ENCODE measurements at regions of chr6 and their contacts with region 1.

Region 1: GRCh38 chr6:11653028-11653583 is 115.6 kb downstream of the TMEM170B start:
- DNase-seq: peak; percentile 42
- H3K4me3 Mint-ChIP-seq: no peak overlapping the region
- H3K27ac Mint-ChIP-seq: no peak overlapping the region
- H3K4me1 Mint-ChIP-seq: peaks cover 7% of the 10 kb centered on the region
- H3K27me3 Mint-ChIP-seq: no peaks in the 10 kb centered on the region
- CTCF ChIP-seq: no peak

Region 2: GRCh38 chr6:11258260-11259237 is 394.6 kb before region 1 on chr6:
- CTCF ChIA-PET with region 1: no interaction called
- intact Hi-C with region 1: no loop called
- DNase-seq: no peak
- H3K4me3 Mint-ChIP-seq: no peak overlapping the region
- H3K27ac Mint-ChIP-seq: no peak overlapping the region
- H3K4me1 Mint-ChIP-seq: peaks cover 11% of the 10 kb centered on the region
- H3K27me3 Mint-ChIP-seq: no peaks in the 10 kb centered on the region
- CTCF ChIP-seq: no peak

Region 3: DNA sequence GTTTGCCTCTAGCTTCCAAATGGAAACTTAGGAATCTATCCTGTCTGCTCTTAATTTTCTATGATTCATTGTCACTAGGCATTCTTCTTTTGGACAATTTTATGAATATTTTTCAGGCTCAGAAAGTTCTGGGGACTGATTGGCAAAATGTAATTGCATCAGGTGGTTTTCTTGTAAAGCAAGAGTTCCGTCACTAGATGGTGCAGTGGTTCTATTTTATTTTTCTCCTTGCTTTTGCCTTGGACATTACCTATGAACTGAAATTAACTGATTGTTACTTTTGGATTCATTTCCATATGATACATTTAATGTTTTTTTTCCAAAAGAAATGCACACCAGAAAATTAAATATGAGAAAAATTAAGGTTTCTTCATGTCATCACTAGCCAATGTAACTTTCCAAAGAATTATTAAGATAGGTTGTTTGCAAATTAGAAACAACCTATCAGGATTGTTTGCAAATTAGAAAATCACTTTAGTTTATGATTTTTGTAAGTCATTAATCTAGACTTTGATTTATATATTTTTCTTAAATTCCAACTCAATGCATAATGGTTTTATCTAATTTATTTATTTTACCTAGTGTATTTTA is 67.6 kb before region 1 on chr6:
- CTCF ChIA-PET with region 1: no interaction called
- intact Hi-C with region 1: loop called (anchors 5 kb)
- DNase-seq: no peak
- H3K4me3 Mint-ChIP-seq: no peak overlapping the region
- H3K27ac Mint-ChIP-seq: no peak overlapping the region
- H3K4me1 Mint-ChIP-seq: no peaks in the 10 kb centered on the region
- H3K27me3 Mint-ChIP-seq: no peaks in the 10 kb centered on the region
- CTCF ChIP-seq: no peak

Region 4: GRCh38 chr6:11609315-11610071 is 43.6 kb before region 1 on chr6:
- CTCF ChIA-PET with region 1: no interaction called
- intact Hi-C with region 1: loop called (anchors 5 kb)
- DNase-seq: no peak
- H3K4me3 Mint-ChIP-seq: no peak overlapping the region
- H3K27ac Mint-ChIP-seq: no peak overlapping the region
- H3K4me1 Mint-ChIP-seq: peaks cover 17% of the 10 kb centered on the region
- H3K27me3 Mint-ChIP-seq: no peaks in the 10 kb centered on the region
- CTCF ChIP-seq: no peak

Region 5: GRCh38 chr6:11854408-11855165 is 201.5 kb after region 1 on chr6:
- CTCF ChIA-PET with region 1: no interaction called
- intact Hi-C with region 1: no loop called
- DNase-seq: no peak
- H3K4me3 Mint-ChIP-seq: no peak overlapping the region
- H3K27ac Mint-ChIP-seq: no peak overlapping the region
- H3K4me1 Mint-ChIP-seq: no peaks in the 10 kb centered on the region
- H3K27me3 Mint-ChIP-seq: no peaks in the 10 kb centered on the region
- CTCF ChIP-seq: no peak

Region 6: DNA sequence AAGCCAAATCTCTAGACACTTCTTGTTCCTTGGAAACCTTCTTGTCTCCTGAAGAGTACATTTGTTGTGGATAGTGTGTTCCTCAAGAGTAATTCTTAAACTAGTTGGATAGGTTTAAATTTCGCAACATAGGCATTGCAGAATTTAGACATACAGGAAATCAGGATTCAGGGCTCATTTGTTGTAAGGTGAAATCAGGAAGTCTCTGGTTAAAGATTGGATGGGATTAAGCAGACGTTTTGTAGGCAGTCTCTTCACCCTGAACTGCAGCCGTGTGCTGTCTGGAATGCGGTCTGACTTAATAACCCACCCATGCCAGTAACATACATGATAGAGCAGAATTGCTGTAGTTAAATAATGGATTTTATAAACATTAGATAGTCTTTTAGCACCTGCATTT is 380.7 kb after region 1 on chr6:
- CTCF ChIA-PET with region 1: no interaction called
- intact Hi-C with region 1: loop called (anchors 10 kb)
- DNase-seq: no peak
- H3K4me3 Mint-ChIP-seq: no peak overlapping the region
- H3K27ac Mint-ChIP-seq: no peak overlapping the region
- H3K4me1 Mint-ChIP-seq: peaks cover 24% of the 10 kb centered on the region
- H3K27me3 Mint-ChIP-seq: no peaks in the 10 kb centered on the region
- CTCF ChIP-seq: no peak

Region 7: DNA sequence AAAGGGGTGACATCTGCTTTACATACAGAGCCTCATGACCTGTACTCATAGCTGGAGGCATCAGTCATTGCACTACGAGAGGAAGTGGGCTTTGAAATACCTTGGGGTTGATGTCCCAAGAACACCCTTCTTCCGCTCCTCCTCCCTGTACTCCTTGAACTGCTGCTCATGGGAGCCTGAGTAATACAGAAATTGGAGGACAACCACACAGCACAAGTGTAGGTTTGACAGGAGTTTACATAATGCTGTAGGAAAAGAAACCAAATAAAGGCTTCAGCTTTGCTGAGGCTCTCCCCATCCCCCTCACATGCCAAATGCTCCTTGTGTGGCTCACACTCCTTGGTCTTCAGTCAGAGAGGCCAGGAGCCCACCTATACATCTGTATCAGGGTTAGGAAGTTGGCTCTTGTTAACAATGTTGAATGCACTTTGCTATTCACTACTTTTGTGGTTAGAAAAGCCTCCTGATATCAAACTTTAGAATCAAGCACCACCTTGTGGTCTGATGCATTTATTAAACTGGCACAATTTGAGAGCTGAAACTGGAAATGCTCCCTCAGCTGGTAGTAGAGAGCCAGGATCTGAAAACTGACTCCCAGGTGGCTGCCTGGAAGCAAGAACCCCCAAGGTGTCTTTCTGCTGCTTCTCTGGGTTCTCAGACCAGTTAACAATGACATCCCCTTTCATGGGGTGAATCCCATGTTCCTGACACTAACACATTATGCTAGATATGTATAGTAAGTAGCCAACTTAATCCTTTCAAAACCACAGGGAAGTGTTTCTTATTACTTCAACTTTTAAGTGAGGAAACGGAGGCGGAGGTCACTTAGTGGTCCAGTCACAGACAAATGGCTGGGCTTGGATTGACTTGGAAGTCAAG is 580.8 kb after region 1 on chr6:
- CTCF ChIA-PET with region 1: interaction called, 16 read pairs
- intact Hi-C with region 1: loop called (anchors 2 kb)
- DNase-seq: peak; percentile 29
- H3K4me3 Mint-ChIP-seq: no peak overlapping the region
- H3K27ac Mint-ChIP-seq: no peak overlapping the region
- H3K4me1 Mint-ChIP-seq: peaks cover 8% of the 10 kb centered on the region
- H3K27me3 Mint-ChIP-seq: no peaks in the 10 kb centered on the region
- CTCF ChIP-seq: peak; percentile 64